AG04449 (cell line): ENCODE measurements at regions of chr2 and their contacts with region 1.

Region 1: DNA sequence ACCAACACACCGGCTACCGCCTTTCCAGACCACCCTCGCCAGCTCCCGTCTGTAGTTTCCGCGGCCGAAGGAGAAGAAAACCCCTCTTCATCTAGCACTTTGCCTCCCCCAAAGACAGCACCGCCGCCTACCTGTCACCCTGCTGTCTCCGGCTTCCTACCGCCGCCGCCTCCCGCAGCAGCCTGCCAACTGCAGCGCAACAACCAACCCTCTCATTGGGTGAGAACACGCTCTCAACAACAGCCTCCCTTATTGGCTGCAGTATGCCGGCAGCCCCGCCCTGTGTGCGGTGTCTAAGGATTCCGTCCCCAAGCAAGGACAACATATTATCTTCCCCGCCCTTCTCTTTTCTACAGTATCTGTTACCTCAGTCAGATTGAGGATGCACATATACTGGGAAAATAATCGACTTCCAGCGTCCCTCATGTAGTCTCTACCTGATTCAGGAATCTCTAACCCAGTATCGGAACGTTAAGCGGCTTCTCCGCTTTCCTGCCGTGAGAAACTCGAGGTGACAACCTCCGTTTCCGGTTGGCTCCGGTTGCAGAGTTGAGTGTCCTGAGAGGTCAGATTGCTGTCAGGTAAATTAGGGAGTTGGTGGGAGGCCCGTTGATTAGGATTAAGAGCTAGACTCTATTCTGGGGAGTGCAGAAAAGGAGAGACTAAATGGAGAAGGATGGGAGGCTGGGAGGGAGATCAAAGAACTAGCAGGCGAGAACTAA is at the starts of genes HYCC2 and NDUFB3:
- DNase-seq: peak; percentile 59
- H3K4me3 ChIP-seq: peak within 1 kb of the TSS; percentile 99
- CTCF ChIP-seq: peak; percentile 42

Region 2: GRCh38 chr2:200913654-200914053 is 158.0 kb before region 1 on chr2:
- CTCF ChIA-PET with region 1: interaction called, 56 read pairs
- POLR2A ChIA-PET with region 1: no interaction called
- DNase-seq: peak; percentile 66
- H3K4me3 ChIP-seq: no peak overlapping the region
- CTCF ChIP-seq: no peak

Region 3: DNA sequence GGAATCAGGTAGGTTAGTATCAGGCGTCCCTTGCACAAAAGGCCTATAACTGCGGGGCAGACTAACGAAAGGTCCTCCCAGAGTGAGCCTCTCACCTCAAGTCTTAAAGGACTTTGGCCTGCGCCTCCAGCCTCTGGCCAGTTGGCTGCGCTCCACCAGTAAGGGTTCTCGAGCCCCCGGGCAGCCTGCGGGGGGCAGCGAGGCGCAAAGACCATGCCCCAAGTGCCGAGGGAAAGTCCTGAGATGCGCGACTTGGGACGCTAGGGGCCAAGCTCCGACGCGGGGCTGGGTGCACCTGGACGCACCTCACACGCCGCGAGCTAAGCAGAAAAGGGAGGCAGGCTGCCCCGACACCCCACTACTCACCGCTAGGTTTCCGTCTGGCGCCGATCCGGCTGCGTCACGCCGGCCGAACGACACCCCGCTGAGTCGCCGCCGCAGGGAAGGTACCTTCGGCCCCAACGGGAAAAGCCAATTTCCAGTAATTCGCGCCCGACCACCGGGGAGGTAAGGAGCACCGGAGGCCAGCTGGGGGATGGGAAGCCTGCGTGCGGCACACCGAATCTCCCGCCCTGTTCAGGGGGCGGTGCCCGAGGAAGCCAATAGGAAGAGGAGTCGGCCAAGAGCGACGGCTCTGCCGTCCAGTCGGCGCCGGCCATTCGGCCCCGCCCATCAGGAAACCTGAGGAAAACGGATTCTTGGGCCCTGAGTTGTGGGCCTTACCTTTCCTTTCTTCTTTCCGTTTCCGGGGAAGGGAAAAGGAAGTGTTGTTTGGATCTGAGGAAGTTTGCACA is 108.3 kb before region 1 on chr2 and contains the start of gene ORC2:
- CTCF ChIA-PET with region 1: interaction called, 20 read pairs
- POLR2A ChIA-PET with region 1: no interaction called
- DNase-seq: peak; percentile 67
- H3K4me3 ChIP-seq: peak within 1 kb of the TSS; percentile 98
- CTCF ChIP-seq: peak; percentile 55

Region 4: DNA sequence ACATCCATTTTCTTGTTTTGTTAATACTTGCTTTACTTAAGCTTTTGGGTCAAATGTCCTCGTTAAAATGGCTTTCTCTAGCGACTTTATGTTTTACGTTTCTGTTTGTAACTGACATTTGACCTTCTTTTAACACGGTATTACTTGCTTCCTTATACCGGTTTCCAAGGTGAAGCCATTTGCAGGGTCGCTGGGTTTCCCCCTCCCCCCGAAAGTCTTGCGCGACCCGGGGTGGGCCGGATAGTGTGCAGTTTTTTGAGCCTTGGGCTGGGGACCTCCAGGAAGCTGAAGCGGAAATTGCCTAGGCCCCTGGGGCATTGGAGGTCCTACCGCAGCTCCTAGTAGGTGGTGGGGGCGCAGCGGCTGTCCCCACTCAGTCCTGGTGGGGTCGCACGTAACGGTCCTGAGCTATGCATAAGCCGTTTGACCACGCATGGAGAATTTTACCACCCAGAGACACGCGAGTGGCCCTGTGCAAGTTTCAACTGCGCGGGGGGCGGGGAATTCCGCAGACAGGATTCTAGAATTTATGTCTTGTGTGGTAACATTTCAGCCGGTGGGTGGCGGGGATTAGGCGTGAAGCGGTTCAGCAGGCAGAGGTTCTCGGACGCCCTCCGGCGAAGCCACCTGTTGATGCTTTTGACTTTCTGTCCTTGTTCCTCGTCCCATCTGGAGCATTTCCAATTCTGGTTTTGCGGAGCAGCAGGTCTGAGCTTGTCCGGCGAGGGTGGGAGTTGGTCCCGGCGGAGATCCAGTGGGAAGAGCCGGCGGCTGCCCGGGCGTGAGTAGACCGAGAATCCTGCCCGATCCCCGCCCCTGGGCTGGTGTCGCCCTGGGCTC is 46.7 kb after region 1 on chr2:
- CTCF ChIA-PET with region 1: interaction called, 15 read pairs
- POLR2A ChIA-PET with region 1: no interaction called
- DNase-seq: no peak
- H3K4me3 ChIP-seq: peak overlapping the region; percentile 61
- CTCF ChIP-seq: peak; percentile 50

Region 5: DNA sequence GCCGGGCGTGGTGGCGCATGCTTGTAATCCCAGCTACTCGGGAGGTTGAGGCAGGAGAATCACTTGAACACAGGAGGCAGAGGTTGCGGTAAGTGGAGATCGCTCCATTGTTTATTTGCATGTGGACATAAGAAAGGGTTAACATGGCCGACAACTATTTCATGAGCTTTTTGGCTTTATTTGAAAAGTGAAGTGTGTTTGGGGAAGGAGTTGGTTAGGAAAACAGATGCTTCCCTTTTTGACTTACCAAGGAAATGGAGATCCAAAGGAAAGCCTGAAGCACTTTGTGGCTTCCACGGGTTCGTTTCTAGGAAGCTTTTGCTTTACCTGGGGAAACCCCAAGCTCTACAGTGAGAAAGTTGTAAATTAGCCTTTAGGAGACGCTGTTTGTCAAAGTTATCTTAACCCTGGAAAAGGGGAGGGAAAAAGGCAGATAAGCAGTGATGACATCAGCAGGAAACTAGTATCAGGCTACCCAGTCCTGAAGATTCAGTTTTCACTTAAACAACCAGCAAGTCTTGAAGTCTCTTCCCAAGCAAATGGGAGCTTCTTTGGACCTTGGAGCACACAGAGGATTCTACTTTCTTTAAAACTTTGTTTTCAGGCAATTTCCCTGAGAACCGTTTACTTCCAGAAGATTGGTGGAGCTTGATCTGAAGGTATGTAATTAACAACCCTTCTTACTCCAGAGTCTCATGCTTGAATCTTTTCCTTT is 111.2 kb after region 1 on chr2 and contains the start of gene CASP10:
- CTCF ChIA-PET with region 1: interaction called, 10 read pairs
- POLR2A ChIA-PET with region 1: no interaction called
- DNase-seq: no peak
- H3K4me3 ChIP-seq: no peak within 1 kb of the TSS
- CTCF ChIP-seq: no peak